CD8-positive, alpha-beta T cell (primary cell): ENCODE measurements at regions of chr2 and their contacts with region 1.

Region 1: DNA sequence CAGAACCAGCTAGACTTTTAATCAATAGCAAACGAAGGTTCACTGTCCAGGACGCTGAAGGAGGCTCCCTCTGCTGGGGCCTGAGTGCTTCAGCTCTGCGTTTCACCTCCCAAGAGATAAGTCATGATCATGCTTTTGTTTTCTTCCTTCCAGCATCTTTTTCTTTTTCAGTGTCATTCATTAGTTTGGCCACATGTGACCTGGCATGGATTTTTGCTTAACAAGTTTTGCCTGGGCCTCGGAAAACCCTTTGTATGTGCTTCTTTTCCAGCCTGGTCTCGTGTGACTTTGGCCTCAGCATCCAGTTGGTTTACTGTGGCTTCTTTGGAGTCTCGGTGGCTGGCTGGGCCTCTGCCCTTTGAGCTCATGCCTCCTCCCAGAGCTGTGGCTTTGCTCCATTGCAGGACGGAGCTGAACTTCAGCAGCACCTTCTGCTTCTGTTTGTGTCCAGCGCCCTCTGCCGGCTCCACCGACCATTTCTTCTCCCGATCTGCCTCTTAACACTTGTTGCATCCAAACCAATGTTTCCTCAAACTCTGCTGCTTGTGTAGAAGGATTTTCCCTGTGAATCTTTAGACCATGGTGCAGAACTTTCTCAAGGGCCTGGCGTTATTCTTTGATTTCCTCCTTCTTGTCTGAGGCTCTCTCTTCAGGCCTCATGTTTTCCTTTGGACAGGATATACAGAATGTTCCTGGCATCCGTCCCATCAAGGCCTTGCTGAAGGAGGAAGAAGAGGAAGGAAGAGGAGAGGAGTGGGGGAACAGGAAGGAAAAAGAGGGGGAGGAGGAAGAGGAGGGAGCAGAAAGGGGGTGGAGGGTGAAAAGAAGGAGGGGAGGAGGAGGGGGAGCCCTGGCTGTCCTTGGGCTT is 23.6 kb upstream of the HES6 start:
- DNase-seq: peak; percentile 57 to 82 (median 77)
- ATAC-seq: peak; percentile 67
- H3K4me3 ChIP-seq: no peak overlapping the region
- H3K4me3 Mint-ChIP-seq: no peak overlapping the region
- H3K27ac ChIP-seq: no peak overlapping the region
- H3K27ac Mint-ChIP-seq: no peak overlapping the region
- H3K4me1 ChIP-seq: no peaks in the 10 kb centered on the region
- H3K4me1 Mint-ChIP-seq: peaks cover 5% of the 10 kb centered on the region
- H3K27me3 ChIP-seq: no peaks in the 10 kb centered on the region
- H3K27me3 Mint-ChIP-seq: no peaks in the 10 kb centered on the region
- CTCF ChIP-seq: peak; percentile 78

Region 2: DNA sequence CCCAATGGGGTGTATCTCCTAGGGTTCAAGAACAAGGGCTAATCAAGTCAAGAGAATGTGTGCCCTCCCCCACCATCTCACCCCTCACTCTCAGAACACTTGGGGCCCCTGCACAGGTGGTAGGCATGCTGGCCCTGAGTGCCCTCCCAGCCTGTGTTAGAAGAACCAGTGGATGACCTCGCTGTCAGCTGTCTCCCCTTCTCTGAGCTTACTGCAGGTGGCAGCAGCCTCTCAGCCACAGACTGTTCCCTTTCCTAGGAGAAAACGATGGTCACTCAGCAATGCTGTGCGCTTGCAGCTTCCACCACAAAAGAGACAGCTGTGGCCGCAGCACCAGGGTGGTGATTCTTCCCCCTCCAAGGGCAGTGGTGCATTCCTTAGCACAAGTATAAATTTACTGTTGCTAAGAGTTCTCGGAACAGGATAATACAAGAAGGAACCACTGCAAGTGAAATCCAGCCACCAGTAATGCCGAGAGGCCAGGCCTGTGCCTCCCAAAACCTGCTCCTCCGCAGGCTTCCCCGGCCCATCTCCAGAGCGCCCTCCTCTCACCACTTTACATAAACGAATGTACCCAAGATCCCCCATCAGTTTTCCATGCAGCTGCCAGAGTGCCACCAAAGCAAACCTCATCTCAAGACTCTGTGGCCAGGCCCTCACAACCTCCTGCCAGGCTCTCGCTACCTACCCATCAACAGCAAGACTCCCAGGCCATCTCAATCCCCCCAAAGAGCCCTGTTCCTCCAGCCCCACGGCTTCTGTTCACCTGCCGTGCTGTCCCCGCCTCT is 404.9 kb before region 1 on chr2:
- CTCF ChIA-PET with region 1: interaction called, 19 read pairs
- POLR2A ChIA-PET with region 1: no interaction called
- intact Hi-C with region 1: loop called in 1 of 2 experiments (anchors 1 kb)
- DNase-seq: peak in 4 of 9 experiments; percentile 13 to 68 (median 48)
- ATAC-seq: peak; percentile 54
- H3K4me3 ChIP-seq: no peak overlapping the region
- H3K4me3 Mint-ChIP-seq: no peak overlapping the region
- H3K27ac ChIP-seq: no peak overlapping the region
- H3K27ac Mint-ChIP-seq: no peak overlapping the region
- H3K4me1 ChIP-seq: no peaks in the 10 kb centered on the region
- H3K4me1 Mint-ChIP-seq: peaks cover 12% of the 10 kb centered on the region
- H3K27me3 ChIP-seq: peaks cover 0 to 2% of the 10 kb centered on the region in 2 experiments
- H3K27me3 Mint-ChIP-seq: peaks cover 45% of the 10 kb centered on the region
- CTCF ChIP-seq: no peak

Region 3: DNA sequence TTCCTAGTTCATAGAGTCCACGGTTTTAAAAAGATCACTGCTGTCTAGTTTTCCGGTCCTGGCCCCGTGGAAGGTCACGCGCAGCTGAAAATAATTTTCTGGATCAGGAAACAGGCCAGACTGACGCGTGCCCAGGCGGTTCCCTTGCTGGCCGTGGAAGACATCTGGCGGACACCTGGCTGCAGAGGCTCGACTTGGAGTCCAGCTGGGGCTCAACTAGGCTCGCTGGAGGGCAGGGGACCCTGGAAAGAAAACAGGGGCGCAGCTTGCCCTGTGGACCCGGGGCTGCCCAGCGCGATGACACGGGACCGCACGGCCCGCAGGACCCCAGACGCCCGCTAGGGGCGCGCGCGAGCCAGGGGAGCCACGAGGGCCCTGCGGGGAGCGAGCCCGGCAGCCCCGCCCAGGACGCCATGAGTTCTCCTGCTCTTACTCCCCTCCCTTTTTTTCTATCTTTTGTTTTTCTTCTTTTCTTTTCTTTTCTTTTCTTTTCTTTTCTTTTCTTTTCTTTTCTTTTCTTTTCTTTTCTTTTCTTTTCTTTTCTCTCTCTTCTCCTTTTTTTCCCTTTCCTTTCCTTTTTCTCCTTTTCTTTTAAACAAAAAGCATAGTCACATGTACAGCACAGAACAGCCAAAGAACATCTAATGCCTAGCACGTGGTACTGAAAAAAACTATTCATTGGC is 339.8 kb before region 1 on chr2:
- CTCF ChIA-PET with region 1: interaction called, 11 read pairs
- POLR2A ChIA-PET with region 1: no interaction called
- intact Hi-C with region 1: loop called in 1 of 2 experiments (anchors 1 kb)
- DNase-seq: peak; percentile 71 to 89 (median 75)
- ATAC-seq: peak; percentile 100
- H3K4me3 ChIP-seq: peak overlapping the region; percentile 46 to 48
- H3K4me3 Mint-ChIP-seq: peak overlapping the region; percentile 29
- H3K27ac ChIP-seq: no peak overlapping the region
- H3K27ac Mint-ChIP-seq: no peak overlapping the region
- H3K4me1 ChIP-seq: peaks cover 5% of the 10 kb centered on the region
- H3K4me1 Mint-ChIP-seq: peaks cover 10% of the 10 kb centered on the region
- H3K27me3 ChIP-seq: no peaks in the 10 kb centered on the region
- H3K27me3 Mint-ChIP-seq: no peaks in the 10 kb centered on the region
- CTCF ChIP-seq: peak; percentile 98

Region 4: GRCh38 chr2:238158527-238159070 is 104.8 kb before region 1 on chr2 and contains the start of gene ERFE:
- CTCF ChIA-PET with region 1: interaction called, 25 read pairs
- POLR2A ChIA-PET with region 1: no interaction called
- intact Hi-C with region 1: loop called (anchors 1 to 2 kb)
- DNase-seq: peak in 7 of 9 experiments; percentile 19 to 67 (median 37)
- ATAC-seq: peak; percentile 83
- H3K4me3 ChIP-seq: peak within 1 kb of the TSS in 1 of 2 experiments; percentile 19
- H3K4me3 Mint-ChIP-seq: peak within 1 kb of the TSS; percentile 66
- H3K27ac ChIP-seq: no peak within 1 kb of the TSS
- H3K27ac Mint-ChIP-seq: no peak within 1 kb of the TSS
- H3K4me1 ChIP-seq: peaks cover 9% of the 10 kb centered on the region
- H3K4me1 Mint-ChIP-seq: peaks cover 12% of the 10 kb centered on the region
- H3K27me3 ChIP-seq: peaks cover 11% of the 10 kb centered on the region in 2 experiments
- H3K27me3 Mint-ChIP-seq: peaks cover 18% of the 10 kb centered on the region
- CTCF ChIP-seq: peak; percentile 23
- total RNA-seq, gene ERFE: not detected

Region 5: GRCh38 chr2:238274152-238274865 is 10.9 kb after region 1 on chr2:
- CTCF ChIA-PET with region 1: interaction called, 21 read pairs
- POLR2A ChIA-PET with region 1: no interaction called
- intact Hi-C with region 1: no loop called
- DNase-seq: no peak
- ATAC-seq: no peak
- H3K4me3 ChIP-seq: no peak overlapping the region
- H3K4me3 Mint-ChIP-seq: no peak overlapping the region
- H3K27ac ChIP-seq: no peak overlapping the region
- H3K27ac Mint-ChIP-seq: no peak overlapping the region
- H3K4me1 ChIP-seq: no peaks in the 10 kb centered on the region
- H3K4me1 Mint-ChIP-seq: peaks cover 5% of the 10 kb centered on the region
- H3K27me3 ChIP-seq: no peaks in the 10 kb centered on the region
- H3K27me3 Mint-ChIP-seq: no peaks in the 10 kb centered on the region
- CTCF ChIP-seq: no peak